IMR-90 (cell line): ENCODE measurements at regions of chr12 and their contacts with region 1.

Region 1: DNA sequence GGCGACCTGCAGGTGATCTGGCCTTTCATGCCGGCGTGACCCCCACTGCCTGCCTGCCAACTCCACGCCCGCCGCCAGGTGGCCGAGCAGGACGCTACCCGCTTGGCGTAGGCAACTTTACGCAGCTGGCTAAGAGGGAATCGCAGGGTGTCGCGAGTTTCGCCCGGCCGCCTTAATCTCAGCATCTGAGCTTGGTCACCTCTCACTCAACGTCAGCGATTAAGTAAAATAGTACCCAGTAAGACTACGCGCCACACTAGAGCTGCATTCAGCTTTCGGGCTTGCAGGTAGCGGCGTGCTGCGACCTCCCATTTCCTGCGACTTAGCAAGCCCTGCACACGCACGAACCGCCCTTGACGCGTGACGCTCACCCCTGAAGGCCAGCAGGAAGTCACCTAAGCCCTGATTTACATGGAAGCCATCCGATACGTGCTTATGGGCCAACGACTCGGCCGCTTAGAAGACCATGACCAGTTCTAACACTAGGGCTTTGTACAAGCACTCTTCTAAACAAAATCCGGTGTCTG is 33.2 kb downstream of the WBP11 start:
- DNase-seq: peak; percentile 68
- ATAC-seq: peak; percentile 42
- H3K4me3 ChIP-seq: peak overlapping the region; percentile 62
- H3K27ac ChIP-seq: peak overlapping the region; percentile 76
- H3K4me1 ChIP-seq: no peaks in the 10 kb centered on the region
- H3K27me3 ChIP-seq: no peaks in the 10 kb centered on the region
- CTCF ChIP-seq: peak; percentile 63
- POLR2A ChIP-seq: peak; percentile 63; the same call in 1 of the 2 replicates
- RAD21 ChIP-seq: peak; percentile 36; the same call in 1 of the 2 replicates

Region 2: GRCh38 chr12:14678547-14679150 is 91.4 kb before region 1 on chr12:
- CTCF ChIA-PET with region 1: no interaction called
- POLR2A ChIA-PET with region 1: no interaction called
- dilution Hi-C with region 1: no loop called
- in situ Hi-C with region 1: no loop called
- intact Hi-C with region 1: no loop called
- DNase-seq: no peak
- ATAC-seq: no peak
- H3K4me3 ChIP-seq: no peak overlapping the region
- H3K27ac ChIP-seq: no peak overlapping the region
- H3K4me1 ChIP-seq: no peaks in the 10 kb centered on the region
- H3K27me3 ChIP-seq: no peaks in the 10 kb centered on the region
- CTCF ChIP-seq: no peak
- POLR2A ChIP-seq: no peak
- RAD21 ChIP-seq: no peak

Region 3: GRCh38 chr12:14803011-14803829 is 33.2 kb after region 1 on chr12 and contains the starts of genes C12orf60 and WBP11:
- CTCF ChIA-PET with region 1: no interaction called
- POLR2A ChIA-PET with region 1: interaction called, 7 read pairs
- dilution Hi-C with region 1: no loop called
- in situ Hi-C with region 1: no loop called
- intact Hi-C with region 1: loop called (anchors 1 kb)
- DNase-seq: peak; percentile 99
- ATAC-seq: peak; percentile 99
- H3K4me3 ChIP-seq: peak within 1 kb of the TSS; percentile 92
- H3K27ac ChIP-seq: peak within 1 kb of the TSS; percentile 82
- H3K4me1 ChIP-seq: no peaks in the 10 kb centered on the region
- H3K27me3 ChIP-seq: no peaks in the 10 kb centered on the region
- CTCF ChIP-seq: no peak
- POLR2A ChIP-seq: peak; percentile 89
- RAD21 ChIP-seq: no peak
- total RNA-seq, gene C12orf60: 1.1 TPM in 2 replicates
- total RNA-seq, gene WBP11: 2.5 and 3.9 TPM in 2 replicates

Region 4: DNA sequence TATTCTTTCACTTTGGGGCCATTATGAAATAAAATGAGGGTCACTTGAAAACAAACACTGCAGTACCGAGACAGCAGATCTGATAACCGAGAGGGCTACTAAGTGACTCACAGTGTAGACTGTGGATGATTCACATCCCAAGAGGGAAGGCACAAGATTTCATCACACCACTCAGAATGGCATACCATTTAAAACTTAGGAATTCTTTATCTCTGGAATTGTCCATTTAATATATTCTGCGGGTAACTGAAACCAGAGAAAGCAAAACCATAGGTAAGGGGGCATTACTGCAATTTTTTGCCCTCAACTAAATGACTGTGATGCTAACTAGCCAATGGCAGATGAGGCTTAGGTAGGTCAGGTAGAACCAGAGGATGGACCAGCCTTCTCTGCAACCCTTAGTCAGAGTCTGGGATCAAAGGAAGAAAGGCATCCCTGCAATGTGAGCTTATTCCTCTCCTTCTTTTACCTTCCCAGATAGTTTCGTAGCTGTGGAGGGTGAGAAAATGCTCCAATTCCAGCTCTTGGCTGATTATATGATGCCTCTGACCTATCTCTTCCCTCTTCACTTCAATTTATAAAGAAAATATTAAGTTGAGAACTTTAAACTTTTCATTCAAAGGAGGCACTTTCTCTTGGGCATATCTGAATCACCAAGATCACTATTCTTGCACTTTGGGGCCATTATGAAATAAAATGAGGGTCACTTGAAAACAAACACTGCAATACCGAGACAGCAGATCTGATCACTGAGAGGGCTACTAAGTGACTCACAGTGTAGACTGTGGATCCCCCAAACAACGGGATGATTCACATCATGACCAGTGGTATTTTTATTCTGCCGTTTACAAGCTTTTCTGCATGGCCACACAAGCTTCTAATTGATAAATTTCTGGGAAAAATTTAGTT is 66.5 kb after region 1 on chr12:
- CTCF ChIA-PET with region 1: no interaction called
- POLR2A ChIA-PET with region 1: no interaction called
- dilution Hi-C with region 1: no loop called
- in situ Hi-C with region 1: no loop called
- intact Hi-C with region 1: loop called (anchors 2 kb)
- DNase-seq: peak; percentile 90
- ATAC-seq: peak; percentile 88
- H3K4me3 ChIP-seq: peak overlapping the region; percentile 3; the same call in 1 of the 2 replicates
- H3K27ac ChIP-seq: peak overlapping the region; percentile 56
- H3K4me1 ChIP-seq: peaks cover 3% of the 10 kb centered on the region; the same call in 1 of the 2 replicates
- H3K27me3 ChIP-seq: no peaks in the 10 kb centered on the region
- CTCF ChIP-seq: no peak
- POLR2A ChIP-seq: no peak
- RAD21 ChIP-seq: no peak

Region 5: GRCh38 chr12:16347391-16348298 is 1577.6 kb after region 1 on chr12 and contains the start of gene MGST1:
- CTCF ChIA-PET with region 1: no interaction called
- POLR2A ChIA-PET with region 1: no interaction called
- dilution Hi-C with region 1: no loop called
- in situ Hi-C with region 1: no loop called
- intact Hi-C with region 1: loop called (anchors 10 kb)
- DNase-seq: peak; percentile 59
- ATAC-seq: peak; percentile 73
- H3K4me3 ChIP-seq: peak within 1 kb of the TSS; percentile 93
- H3K27ac ChIP-seq: peak within 1 kb of the TSS; percentile 98
- H3K4me1 ChIP-seq: peaks cover 6% of the 10 kb centered on the region
- H3K27me3 ChIP-seq: no peaks in the 10 kb centered on the region
- CTCF ChIP-seq: no peak
- POLR2A ChIP-seq: peak; percentile 72
- RAD21 ChIP-seq: no peak
- total RNA-seq, gene MGST1: 87.2 and 105 TPM in 2 replicates